Posterior cingulate gyrus (tissue), 11 donors: ENCODE measurements at regions of chr22 and their contacts with region 1.

Region 1: GRCh38 chr22:40645579-40646197 is 9.2 kb upstream of the MRTFA start:
- DNase-seq: no peak

Region 2: DNA sequence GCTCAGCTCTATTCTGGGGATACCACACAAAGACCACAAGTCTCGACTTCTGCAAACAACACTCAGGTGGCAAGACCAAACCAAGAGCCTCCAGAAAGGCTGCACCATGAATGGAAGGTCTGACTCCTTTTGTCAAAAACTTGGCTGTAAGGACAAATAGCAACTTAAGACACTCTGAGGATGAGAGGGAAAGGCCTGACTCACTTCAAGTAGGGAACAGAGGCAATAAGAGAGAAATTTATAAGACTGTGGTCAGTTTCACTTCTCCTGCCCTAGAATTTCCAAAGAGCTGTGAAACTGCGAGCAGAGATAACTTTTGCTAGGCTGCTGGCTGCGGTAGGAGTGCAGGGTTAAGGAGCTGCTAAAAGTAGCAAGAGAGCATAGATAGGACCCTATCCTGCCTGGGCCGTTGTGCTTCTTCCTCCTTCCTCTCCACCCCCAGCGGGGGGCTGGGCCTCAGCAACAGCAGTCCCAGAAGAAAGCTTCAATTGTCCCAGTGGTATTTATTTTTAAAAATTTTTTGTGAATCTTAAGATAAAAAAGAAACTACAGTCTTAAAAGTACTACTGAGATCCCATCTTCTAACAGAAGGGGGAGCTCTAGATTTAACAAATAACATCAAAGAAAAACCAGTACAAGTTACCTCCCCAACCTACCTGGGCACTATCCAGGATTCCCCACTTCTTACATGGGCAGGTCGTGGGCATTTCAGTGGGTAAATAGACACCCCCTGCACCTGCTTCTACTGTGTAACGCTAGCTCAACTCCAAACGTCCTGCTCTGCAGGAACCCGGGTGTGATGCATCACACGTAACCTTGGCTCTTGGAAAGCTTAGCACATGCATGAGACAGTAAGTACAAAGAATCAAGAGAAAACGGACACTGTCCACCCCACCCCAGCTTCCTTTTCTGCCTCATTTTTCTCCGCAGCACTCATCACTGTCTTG is 208.9 kb before region 1 on chr22:
- intact Hi-C with region 1: loop called (anchors 1 kb)
- DNase-seq: peak in 1 of 10 donors; percentile 85

Region 3: GRCh38 chr22:40525249-40525884 is 120.3 kb before region 1 on chr22:
- intact Hi-C with region 1: loop called (anchors 1 kb)
- DNase-seq: peak in 7 of 10 donors; percentile 21 to 73 (median 43)

Region 4: DNA sequence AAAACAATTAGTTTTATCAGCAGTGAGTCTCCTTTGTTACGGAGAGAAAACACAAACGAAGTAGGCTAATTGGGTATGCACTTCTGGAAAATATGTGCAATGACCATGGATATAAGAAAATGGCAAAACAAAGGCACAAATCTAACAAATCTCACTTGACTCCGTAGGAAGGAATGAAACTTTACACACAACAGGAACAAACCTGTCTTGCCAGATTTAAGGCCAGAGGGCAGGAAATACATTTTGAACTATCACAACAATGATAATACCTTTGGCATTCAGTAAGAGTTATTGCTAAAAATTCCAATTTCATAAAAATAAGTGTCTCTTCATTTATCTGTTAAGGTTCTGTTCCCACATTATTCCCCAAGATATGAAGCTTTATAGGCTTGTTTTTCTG is 136.8 kb after region 1 on chr22:
- intact Hi-C with region 1: no loop called
- DNase-seq: no peak